Heart right ventricle (tissue), 16 donors: ENCODE measurements at regions of chr6 and their contacts with region 1.

Region 1: GRCh38 chr6:43506667-43507471 is 3.3 kb downstream of the LRRC73 start:
- DNase-seq: peak; percentile 58 to 81
- ATAC-seq: peak; percentile 6 to 72 (median 52)
- H3K4me3 ChIP-seq: no peak overlapping the region
- H3K27ac ChIP-seq: peak overlapping the region in 2 of 10 donors; percentile 21 to 23
- H3K4me1 ChIP-seq: peaks cover 7 to 62% (median 42%) of the 10 kb centered on the region in 9 donors
- H3K27me3 ChIP-seq: peaks cover 0 to 27% (median 0%) of the 10 kb centered on the region in 7 donors
- CTCF ChIP-seq: peak; percentile 90 to 99 (median 96)

Region 2: DNA sequence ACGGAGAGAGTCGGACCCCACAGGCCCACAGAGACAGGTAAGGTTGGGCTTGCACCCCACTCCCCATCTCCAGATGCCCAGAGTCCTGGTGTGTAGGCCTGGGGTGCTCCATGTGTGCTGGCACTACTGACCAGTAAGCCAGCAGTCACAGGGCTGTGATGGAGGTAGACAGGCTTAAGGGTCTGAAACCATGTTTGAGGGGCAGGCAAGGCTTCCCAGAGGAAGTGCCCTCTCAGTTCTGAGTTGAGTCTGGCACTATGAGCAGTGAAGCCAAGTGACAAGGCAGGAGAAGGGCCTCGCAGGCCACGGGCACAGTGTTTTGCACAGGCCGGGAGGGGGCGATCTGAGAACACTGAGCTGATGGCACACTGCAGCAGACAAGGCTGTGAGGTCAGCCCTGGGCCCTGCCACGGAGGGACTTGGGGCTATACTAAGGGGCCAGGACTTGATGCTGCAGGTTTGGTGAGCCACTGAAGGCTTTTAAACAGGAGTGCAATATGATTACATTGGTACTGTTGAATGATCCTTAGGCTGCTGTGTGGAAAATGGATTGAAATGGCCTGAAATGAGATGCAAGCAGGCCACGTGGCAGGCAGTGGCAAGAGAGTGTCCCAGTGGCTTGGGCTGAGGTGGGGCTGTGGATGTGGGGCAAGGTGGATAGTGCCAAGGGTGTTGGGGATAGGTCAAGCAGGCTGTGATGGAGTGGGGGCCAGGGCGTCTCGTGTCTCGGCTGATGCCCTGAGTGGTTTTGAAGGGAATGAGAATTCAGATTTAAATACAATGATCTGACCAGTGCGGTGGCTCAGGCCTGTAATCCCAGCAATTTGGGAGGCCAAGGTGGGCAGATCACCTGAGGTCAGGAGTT is 243.3 kb before region 1 on chr6:
- intact Hi-C with region 1: loop called in 6 of 10 experiments (anchors 5 to 10 kb)
- DNase-seq: peak; percentile 76
- ATAC-seq: peak; percentile 76 to 86 (median 80)
- H3K4me3 ChIP-seq: no peak overlapping the region
- H3K27ac ChIP-seq: no peak overlapping the region
- H3K4me1 ChIP-seq: peaks cover 0 to 23% (median 11%) of the 10 kb centered on the region in 9 donors
- H3K27me3 ChIP-seq: peaks cover 0 to 3% (median 0%) of the 10 kb centered on the region in 7 donors
- CTCF ChIP-seq: peak; percentile 44 to 82 (median 71)

Region 3: DNA sequence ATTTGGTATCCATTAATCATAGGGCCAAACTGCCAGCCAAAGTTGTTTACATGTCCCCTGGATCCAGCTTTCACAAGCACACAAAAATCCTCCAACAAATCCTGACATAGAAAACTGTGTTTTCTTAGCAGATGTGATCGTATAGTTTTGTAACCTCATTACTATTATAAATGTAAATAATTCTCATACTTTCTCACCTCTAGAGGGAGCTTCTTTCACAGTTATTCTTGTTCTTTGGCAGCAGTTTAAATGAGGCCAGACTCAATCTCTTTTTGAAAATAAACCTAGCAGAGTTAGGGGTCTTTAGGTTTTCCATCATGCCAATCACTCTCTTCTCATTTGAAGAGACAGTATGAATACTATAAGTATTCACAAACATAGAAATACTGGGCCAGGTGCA is 120.4 kb before region 1 on chr6:
- intact Hi-C with region 1: loop called in 5 of 10 experiments (anchors 2 to 10 kb)
- DNase-seq: no peak
- ATAC-seq: no peak
- H3K4me3 ChIP-seq: no peak overlapping the region
- H3K27ac ChIP-seq: no peak overlapping the region
- H3K4me1 ChIP-seq: peaks cover 0 to 28% (median 0%) of the 10 kb centered on the region in 9 donors
- H3K27me3 ChIP-seq: peaks cover 0 to 39% (median 5%) of the 10 kb centered on the region in 7 donors
- CTCF ChIP-seq: peak in 7 of 9 donors; percentile 11 to 69 (median 39)

Region 4: GRCh38 chr6:43454696-43455530 is 52.0 kb before region 1 on chr6:
- intact Hi-C with region 1: loop called (anchors 1 to 5 kb)
- DNase-seq: peak; percentile 85 to 87
- ATAC-seq: peak; percentile 86 to 92 (median 90)
- H3K4me3 ChIP-seq: peak overlapping the region; percentile 28 to 60 (median 56)
- H3K27ac ChIP-seq: peak overlapping the region in 2 of 10 donors; percentile 13 to 62
- H3K4me1 ChIP-seq: peaks cover 0 to 22% (median 12%) of the 10 kb centered on the region in 9 donors
- H3K27me3 ChIP-seq: peaks cover 0 to 53% (median 12%) of the 10 kb centered on the region in 7 donors
- CTCF ChIP-seq: peak in 3 of 9 donors; percentile 2 to 32 (median 3)

Region 5: GRCh38 chr6:43644931-43645612 is 138.2 kb after region 1 on chr6 and contains the start of gene RSPH9:
- intact Hi-C with region 1: no loop called
- DNase-seq: peak; percentile 61 to 72
- ATAC-seq: peak; percentile 65 to 91 (median 86)
- H3K4me3 ChIP-seq: peak within 1 kb of the TSS; percentile 21 to 59 (median 49)
- H3K27ac ChIP-seq: peak within 1 kb of the TSS in 4 of 10 donors; percentile 15 to 49 (median 30)
- H3K4me1 ChIP-seq: peaks cover 0 to 21% (median 13%) of the 10 kb centered on the region in 9 donors
- H3K27me3 ChIP-seq: no peaks in the 10 kb centered on the region
- CTCF ChIP-seq: no peak
- total RNA-seq, gene RSPH9: 0.09 to 0.15 (median 0.12) TPM in 5 of 10 donors, not detected in the others